Endothelial cell of umbilical vein (primary cell): ENCODE measurements at regions of chr3 and their contacts with region 1.

Region 1: DNA sequence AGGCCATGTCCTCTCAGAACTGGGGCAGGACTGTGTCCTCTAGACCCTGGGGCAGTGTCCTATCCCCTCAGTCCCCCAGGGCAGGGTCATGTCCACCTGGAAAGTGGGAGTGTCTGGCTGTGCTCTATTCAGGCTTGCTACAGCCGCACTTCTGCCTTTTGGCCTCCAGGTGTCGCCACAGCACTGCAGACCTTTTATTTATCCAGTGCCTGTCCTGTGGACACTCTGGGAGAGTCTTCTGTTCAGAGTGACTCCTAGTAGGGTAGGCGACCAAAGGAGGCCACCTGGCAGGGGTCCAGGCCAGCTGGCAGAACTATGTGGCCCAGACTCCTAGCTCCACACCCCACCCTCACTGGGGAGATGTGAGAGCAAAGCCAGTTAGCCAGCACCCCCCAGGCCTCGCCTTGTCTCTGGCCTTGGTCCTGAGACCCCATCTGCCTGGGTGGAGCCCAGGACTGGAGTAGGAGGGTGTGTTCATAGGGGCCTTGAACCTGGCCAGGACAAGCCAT is 3.9 kb downstream of the TMIE start:
- DNase-seq: peak; percentile 67
- H3K4me3 ChIP-seq: no peak overlapping the region
- H3K27ac ChIP-seq: no peak overlapping the region
- H3K4me1 ChIP-seq: peaks cover 11% of the 10 kb centered on the region
- H3K27me3 ChIP-seq: peaks cover 6 to 7% of the 10 kb centered on the region in 2 experiments
- CTCF ChIP-seq: peak; percentile 88 to 92
- POLR2A ChIP-seq: no peak

Region 2: GRCh38 chr3:46078712-46079400 is 626.2 kb before region 1 on chr3:
- CTCF ChIA-PET with region 1: no interaction called
- POLR2A ChIA-PET with region 1: no interaction called
- dilution Hi-C with region 1: no loop called
- intact Hi-C with region 1: no loop called
- DNase-seq: peak; percentile 87
- H3K4me3 ChIP-seq: no peak overlapping the region
- H3K27ac ChIP-seq: no peak overlapping the region
- H3K4me1 ChIP-seq: no peaks in the 10 kb centered on the region
- H3K27me3 ChIP-seq: peaks cover 9 to 11% of the 10 kb centered on the region in 2 experiments
- CTCF ChIP-seq: peak; percentile 88 to 98
- POLR2A ChIP-seq: no peak

Region 3: GRCh38 chr3:46663591-46664135 is 41.4 kb before region 1 on chr3:
- CTCF ChIA-PET with region 1: interaction called, 12 read pairs
- POLR2A ChIA-PET with region 1: no interaction called
- dilution Hi-C with region 1: no loop called
- intact Hi-C with region 1: no loop called
- DNase-seq: peak; percentile 46
- H3K4me3 ChIP-seq: no peak overlapping the region
- H3K27ac ChIP-seq: no peak overlapping the region
- H3K4me1 ChIP-seq: no peaks in the 10 kb centered on the region
- H3K27me3 ChIP-seq: no peaks in the 10 kb centered on the region
- CTCF ChIP-seq: peak; percentile 12 to 16
- POLR2A ChIP-seq: no peak

Region 4: DNA sequence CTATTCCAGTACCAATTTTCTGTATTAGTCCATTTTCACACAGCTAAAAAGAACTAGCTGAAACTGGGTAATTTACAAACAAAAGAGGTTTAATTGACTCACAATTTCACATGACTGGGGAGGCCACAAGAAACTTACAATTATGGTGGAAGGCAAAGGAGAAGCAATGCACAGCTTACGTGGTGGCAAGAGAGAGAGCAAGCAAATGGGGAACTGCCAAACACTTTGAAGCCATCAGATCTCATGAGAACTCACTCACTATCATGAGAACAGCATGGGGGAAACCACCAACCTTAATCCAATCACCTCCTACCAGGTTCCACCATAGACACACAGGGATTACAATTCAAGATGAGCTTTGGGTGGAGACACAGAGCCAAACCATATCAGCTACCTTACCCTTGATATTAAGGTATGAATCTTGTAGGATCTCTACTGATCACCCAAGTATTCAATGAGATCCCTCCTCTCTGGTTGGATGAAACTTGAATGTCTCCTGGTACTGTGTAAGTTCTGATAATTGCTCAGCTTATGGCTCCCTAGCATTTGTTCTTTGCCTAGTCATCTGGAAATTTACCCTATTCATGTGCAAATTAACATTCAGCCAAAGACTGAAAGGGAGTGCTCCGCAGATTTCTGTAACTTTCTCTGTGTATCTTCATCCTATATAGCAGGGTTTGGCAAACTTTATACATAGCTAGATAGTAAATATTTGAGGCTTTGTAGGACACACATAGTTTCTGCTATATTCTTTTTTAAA is 119.3 kb after region 1 on chr3:
- CTCF ChIA-PET with region 1: no interaction called
- POLR2A ChIA-PET with region 1: no interaction called
- dilution Hi-C with region 1: no loop called
- intact Hi-C with region 1: no loop called
- DNase-seq: no peak
- H3K4me3 ChIP-seq: no peak overlapping the region
- H3K27ac ChIP-seq: no peak overlapping the region
- H3K4me1 ChIP-seq: no peaks in the 10 kb centered on the region
- H3K27me3 ChIP-seq: peaks cover 8 to 13% of the 10 kb centered on the region in 2 experiments
- CTCF ChIP-seq: no peak
- POLR2A ChIP-seq: no peak

Region 5: GRCh38 chr3:46866720-46867549 is 161.9 kb after region 1 on chr3:
- CTCF ChIA-PET with region 1: no interaction called
- POLR2A ChIA-PET with region 1: no interaction called
- dilution Hi-C with region 1: no loop called
- intact Hi-C with region 1: loop called (anchors 1 kb)
- DNase-seq: peak; percentile 38
- H3K4me3 ChIP-seq: no peak overlapping the region
- H3K27ac ChIP-seq: no peak overlapping the region
- H3K4me1 ChIP-seq: no peaks in the 10 kb centered on the region
- H3K27me3 ChIP-seq: no peaks in the 10 kb centered on the region
- CTCF ChIP-seq: peak; percentile 82 to 94
- POLR2A ChIP-seq: no peak

Region 6: DNA sequence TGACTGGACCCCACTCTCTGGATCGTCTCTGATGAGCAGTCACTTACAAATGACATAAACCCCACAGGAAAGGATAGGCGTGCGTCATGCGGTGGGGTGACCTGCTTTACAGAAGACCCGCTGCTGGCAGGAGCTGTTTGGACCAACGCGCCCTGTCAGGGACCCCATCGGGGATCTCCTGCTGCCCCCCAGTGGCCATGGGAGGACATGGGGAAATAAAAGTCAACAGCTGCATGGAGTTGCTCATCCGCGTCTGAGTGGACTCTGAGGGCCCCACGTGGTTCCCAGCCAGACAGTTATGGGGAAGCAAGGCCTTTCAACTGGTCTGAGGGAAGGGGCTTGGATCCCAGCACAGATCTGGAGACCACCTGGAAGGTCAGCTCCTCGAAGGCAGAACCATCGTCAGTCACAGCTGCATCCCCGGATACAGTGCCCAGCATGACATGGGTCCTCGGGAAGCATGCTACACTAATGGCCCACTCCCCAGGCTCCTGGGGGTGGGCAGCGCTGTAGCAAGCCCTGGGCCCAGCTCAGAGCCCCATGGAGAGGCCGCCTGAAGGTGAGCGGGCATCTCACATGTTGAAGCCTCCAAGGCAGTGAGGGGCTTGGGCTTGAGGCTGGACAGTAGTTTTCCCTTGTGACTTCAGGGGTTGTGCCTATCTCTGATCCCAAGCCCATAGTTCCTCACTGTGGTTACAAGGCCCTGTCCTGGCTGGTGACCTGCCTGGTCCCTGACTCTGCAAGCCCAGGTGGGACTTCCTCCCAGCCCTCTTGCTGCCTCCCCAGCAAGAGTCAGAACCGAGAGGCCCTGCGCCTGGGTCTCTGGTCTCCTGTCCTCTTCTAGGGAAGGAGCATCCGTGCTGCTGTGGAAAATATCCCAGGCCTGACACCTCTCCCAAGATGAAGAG is 204.7 kb after region 1 on chr3:
- CTCF ChIA-PET with region 1: interaction called, 37 read pairs
- POLR2A ChIA-PET with region 1: no interaction called
- dilution Hi-C with region 1: no loop called
- intact Hi-C with region 1: loop called (anchors 1 kb)
- DNase-seq: peak; percentile 81
- H3K4me3 ChIP-seq: no peak overlapping the region
- H3K27ac ChIP-seq: no peak overlapping the region
- H3K4me1 ChIP-seq: peaks cover 10% of the 10 kb centered on the region
- H3K27me3 ChIP-seq: no peaks in the 10 kb centered on the region
- CTCF ChIP-seq: peak; percentile 87 to 88
- POLR2A ChIP-seq: no peak

Region 7: DNA sequence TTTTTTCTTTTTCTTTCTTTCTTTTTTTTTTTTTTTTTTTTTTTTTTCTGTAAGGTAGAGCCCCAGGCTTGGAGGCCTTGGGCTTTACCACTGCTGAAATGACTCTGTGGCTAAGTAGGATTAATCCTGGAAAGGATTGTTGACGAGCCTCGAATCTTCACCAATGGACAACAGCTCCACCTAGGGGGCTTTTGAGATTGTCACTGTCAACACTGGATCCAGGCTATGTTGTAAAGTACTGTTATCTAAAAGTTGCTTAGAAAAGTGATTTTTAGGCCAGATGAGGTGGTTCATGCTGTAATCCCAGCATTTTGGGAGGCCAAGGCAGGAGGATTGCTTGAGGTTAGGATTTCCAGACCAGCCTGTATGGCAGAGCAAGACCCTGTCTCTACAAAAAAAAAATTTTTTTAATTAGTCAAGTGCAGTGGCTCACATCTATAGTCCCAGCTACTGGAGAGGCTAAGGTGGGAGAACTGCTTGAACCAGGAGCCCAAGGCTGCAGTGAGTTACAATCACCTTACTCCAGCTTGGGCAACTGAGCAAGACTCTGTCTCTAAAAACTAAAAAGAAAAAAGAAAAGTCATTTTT is 619.3 kb after region 1 on chr3:
- CTCF ChIA-PET with region 1: interaction called, 5 read pairs
- POLR2A ChIA-PET with region 1: no interaction called
- dilution Hi-C with region 1: no loop called
- intact Hi-C with region 1: loop called (anchors 5 kb)
- DNase-seq: peak; percentile 77
- H3K4me3 ChIP-seq: no peak overlapping the region
- H3K27ac ChIP-seq: no peak overlapping the region
- H3K4me1 ChIP-seq: no peaks in the 10 kb centered on the region
- H3K27me3 ChIP-seq: no peaks in the 10 kb centered on the region
- CTCF ChIP-seq: peak; percentile 60 to 72
- POLR2A ChIP-seq: no peak